Esophagus muscularis mucosa (tissue), 4 donors: ENCODE measurements at regions of chr12 and their contacts with region 1.

Region 1: GRCh38 chr12:4538207-4539160 is at the start of gene RAD51AP1:
- DNase-seq: peak; percentile 98
- H3K4me3 ChIP-seq: peak within 1 kb of the TSS; percentile 60 to 79 (median 70)
- H3K27ac ChIP-seq: peak within 1 kb of the TSS; percentile 87 to 91 (median 90)
- H3K4me1 ChIP-seq: peaks cover 14 to 29% (median 21%) of the 10 kb centered on the region in 4 donors
- H3K27me3 ChIP-seq: no peaks in the 10 kb centered on the region
- CTCF ChIP-seq: no peak
- EP300 ChIP-seq: peak; percentile 66
- POLR2A ChIP-seq: no peak
- total RNA-seq, gene RAD51AP1: 0.58 to 1.4 (median 0.75) TPM

Region 2: GRCh38 chr12:4356041-4356327 is 182.5 kb before region 1 on chr12:
- intact Hi-C with region 1: loop called (anchors 10 kb)
- DNase-seq: no peak
- H3K4me3 ChIP-seq: no peak overlapping the region
- H3K27ac ChIP-seq: no peak overlapping the region
- H3K4me1 ChIP-seq: peaks cover 0 to 3% (median 0%) of the 10 kb centered on the region in 4 donors
- H3K27me3 ChIP-seq: no peaks in the 10 kb centered on the region
- CTCF ChIP-seq: peak in 2 of 3 experiments; percentile 25 to 44
- EP300 ChIP-seq: no peak
- POLR2A ChIP-seq: no peak

Region 3: DNA sequence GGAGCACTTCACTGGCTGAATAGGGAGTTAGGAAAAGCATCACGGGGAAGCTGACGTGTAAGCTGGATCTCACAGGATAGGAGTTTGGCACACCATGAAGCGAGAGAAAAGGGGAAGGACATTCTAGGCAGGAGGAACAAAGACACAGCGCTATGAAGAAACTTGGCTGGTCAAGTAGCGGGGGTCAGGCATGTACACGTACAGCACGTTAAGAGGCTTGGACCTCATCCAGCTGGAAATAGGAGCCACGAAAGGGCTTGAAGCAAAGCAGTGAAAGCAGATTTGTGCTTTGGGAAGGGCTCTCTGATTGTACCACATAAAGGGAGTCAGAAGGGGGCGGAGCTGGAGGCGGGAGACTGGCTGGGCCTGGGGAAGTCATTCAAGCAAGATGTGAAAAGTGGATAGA is 162.1 kb after region 1 on chr12:
- intact Hi-C with region 1: no loop called
- DNase-seq: peak; percentile 95
- H3K4me3 ChIP-seq: peak overlapping the region in 2 of 4 donors; percentile 9 to 10
- H3K27ac ChIP-seq: peak overlapping the region; percentile 65 to 73 (median 66)
- H3K4me1 ChIP-seq: peaks cover 0 to 7% (median 0%) of the 10 kb centered on the region in 4 donors
- H3K27me3 ChIP-seq: no peaks in the 10 kb centered on the region
- CTCF ChIP-seq: no peak
- EP300 ChIP-seq: no peak
- POLR2A ChIP-seq: no peak